ENCODE measurements at regions of chr4 and their contacts with region 1.

Region 1: GRCh38 chr4:41057467-41057866 is 156.9 kb downstream of the APBB2 start:
- DNase-seq: no peak
- ATAC-seq: no peak
- H3K4me3 ChIP-seq: no peak overlapping the region
- H3K27ac ChIP-seq: no peak overlapping the region
- H3K4me1 ChIP-seq: no peaks in the 10 kb centered on the region
- H3K27me3 ChIP-seq: no peaks in the 10 kb centered on the region
- CTCF ChIP-seq: no peak
- EP300 ChIP-seq: no peak
- POLR2A ChIP-seq: no peak
- RAD21 ChIP-seq: no peak

Region 2: GRCh38 chr4:41079871-41080560 is 22.5 kb after region 1 on chr4:
- CTCF ChIA-PET with region 1: no interaction called
- POLR2A ChIA-PET with region 1: no interaction called
- in situ Hi-C with region 1: no loop called
- intact Hi-C with region 1: loop called (anchors 1 kb)
- DNase-seq: no peak
- ATAC-seq: no peak
- H3K4me3 ChIP-seq: no peak overlapping the region
- H3K27ac ChIP-seq: no peak overlapping the region
- H3K4me1 ChIP-seq: peaks cover 29% of the 10 kb centered on the region
- H3K27me3 ChIP-seq: no peaks in the 10 kb centered on the region
- CTCF ChIP-seq: no peak
- EP300 ChIP-seq: no peak
- POLR2A ChIP-seq: no peak
- RAD21 ChIP-seq: no peak

Measured in HepG2 (cell line).